ENCODE measurements at regions of chr10 and their contacts with region 1.

Region 1: GRCh38 chr10:122298598-122299301 is 27.7 kb downstream of the BTBD16 start:
- DNase-seq: peak; percentile 86
- H3K27ac ChIP-seq: peak overlapping the region; percentile 68
- CTCF ChIP-seq: peak; percentile 88

Region 2: GRCh38 chr10:122267849-122268737 is 30.7 kb before region 1 on chr10:
- CTCF ChIA-PET with region 1: interaction called, 11 read pairs
- POLR2A ChIA-PET with region 1: no interaction called
- DNase-seq: peak; percentile 78
- H3K27ac ChIP-seq: peak overlapping the region; percentile 24; the same call in 1 of the 2 replicates
- CTCF ChIP-seq: peak; percentile 95

Region 3: DNA sequence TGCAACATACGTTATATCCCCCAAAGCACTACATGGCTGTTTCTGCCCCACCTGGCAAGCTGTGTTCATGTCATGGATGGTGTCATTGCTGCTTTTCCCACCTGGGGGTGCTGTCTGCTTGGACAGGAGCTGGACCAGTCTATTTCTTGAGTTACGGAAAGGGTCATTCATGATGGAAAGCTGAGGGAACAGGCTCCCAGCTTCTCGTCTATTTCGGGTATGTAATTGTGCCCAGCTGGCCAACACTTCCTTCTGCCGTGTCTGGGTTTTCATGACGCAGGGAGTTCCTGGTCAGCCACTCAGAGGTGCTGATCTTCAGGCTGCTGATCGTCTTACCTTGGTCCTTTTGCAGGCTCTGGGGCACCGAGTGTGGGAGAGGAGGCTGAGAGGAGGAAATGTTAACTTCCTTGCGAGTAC is 19.0 kb before region 1 on chr10:
- CTCF ChIA-PET with region 1: interaction called, 13 read pairs
- POLR2A ChIA-PET with region 1: interaction called, 3 read pairs
- DNase-seq: peak; percentile 51
- H3K27ac ChIP-seq: no peak overlapping the region
- CTCF ChIP-seq: peak; percentile 58

Region 4: DNA sequence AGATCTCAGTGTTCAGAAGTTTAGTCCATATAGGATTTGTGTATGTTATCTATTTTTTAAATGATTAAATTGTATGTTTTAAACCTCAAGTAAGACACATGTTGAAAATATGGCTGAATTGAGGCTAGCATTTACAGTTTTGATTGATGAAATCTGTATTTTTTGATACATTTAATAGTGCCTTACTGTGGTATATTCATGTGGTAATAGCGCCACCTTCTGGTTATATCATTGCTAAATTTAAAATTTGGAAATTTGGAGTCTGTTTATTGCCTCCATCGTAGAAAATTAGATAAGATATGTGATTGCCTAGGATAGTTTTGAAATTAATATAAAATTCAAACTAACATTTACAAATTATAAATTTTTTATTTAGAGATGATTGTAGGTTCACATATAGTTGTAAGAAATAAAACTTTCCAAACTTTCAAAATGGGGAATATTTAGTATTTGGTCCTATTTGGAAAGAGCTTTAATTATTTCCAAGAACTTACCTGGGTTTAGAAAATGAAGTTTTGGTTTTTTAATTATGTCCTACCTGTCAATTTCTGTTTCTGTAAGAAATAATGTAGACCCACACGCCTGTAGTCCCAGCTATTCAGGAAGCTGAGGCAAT is 136.6 kb after region 1 on chr10:
- CTCF ChIA-PET with region 1: interaction called, 21 read pairs
- POLR2A ChIA-PET with region 1: no interaction called
- DNase-seq: peak; percentile 48
- H3K27ac ChIP-seq: no peak overlapping the region
- CTCF ChIP-seq: peak; percentile 60

Region 5: DNA sequence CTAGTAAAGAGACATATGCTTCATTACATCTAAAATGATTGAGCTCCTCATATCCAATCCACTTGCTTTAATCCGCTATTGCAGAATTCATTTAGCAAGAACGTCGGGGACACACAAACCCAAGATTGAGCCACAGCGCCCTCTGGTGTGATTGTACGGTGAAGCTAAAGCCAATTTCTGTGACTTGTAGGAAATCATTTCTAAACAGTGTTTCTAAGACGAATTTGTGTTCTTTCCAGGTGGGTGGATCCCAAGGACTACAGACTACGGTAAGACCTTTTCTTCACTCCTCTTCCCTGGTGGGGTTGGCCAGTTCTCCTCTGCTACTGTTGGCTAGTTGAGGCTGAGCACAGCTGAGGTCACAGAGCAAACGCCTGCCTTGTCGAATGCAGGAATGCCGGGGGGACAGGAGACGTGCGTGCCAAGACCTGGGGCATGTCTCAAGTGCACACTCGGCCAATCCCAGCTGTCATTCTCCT is 267.0 kb after region 1 on chr10:
- CTCF ChIA-PET with region 1: interaction called, 26 read pairs
- POLR2A ChIA-PET with region 1: no interaction called
- DNase-seq: peak; percentile 68
- H3K27ac ChIP-seq: peak overlapping the region; percentile 56; the same call in 1 of the 2 replicates
- CTCF ChIP-seq: peak; percentile 79